PC-9 (cell line): ENCODE measurements at regions of chr10 and their contacts with region 1.

Region 1: GRCh38 chr10:114856544-114857282 is 35.1 kb downstream of the FHIP2A start:
- DNase-seq: peak; percentile 12 to 87
- H3K4me3 ChIP-seq: peak overlapping the region; percentile 17; the same call in 1 of the 2 replicates
- H3K27ac ChIP-seq: peak overlapping the region; percentile 83
- H3K4me1 ChIP-seq: peaks cover 37% of the 10 kb centered on the region
- H3K27me3 ChIP-seq: no peaks in the 10 kb centered on the region
- CTCF ChIP-seq: no peak

Region 2: GRCh38 chr10:114623661-114624294 is 232.9 kb before region 1 on chr10:
- CTCF ChIA-PET with region 1: no interaction called
- POLR2A ChIA-PET with region 1: interaction called, 8 read pairs
- intact Hi-C with region 1: loop called (anchors 2 kb)
- DNase-seq: peak; percentile 52 to 96
- H3K4me3 ChIP-seq: no peak overlapping the region
- H3K27ac ChIP-seq: peak overlapping the region; percentile 91
- H3K4me1 ChIP-seq: peaks cover 62% of the 10 kb centered on the region
- H3K27me3 ChIP-seq: no peaks in the 10 kb centered on the region
- CTCF ChIP-seq: no peak

Region 3: GRCh38 chr10:114821293-114821914 is 35.3 kb before region 1 on chr10 and contains the start of gene FHIP2A:
- CTCF ChIA-PET with region 1: interaction called, 6 read pairs
- POLR2A ChIA-PET with region 1: interaction called, 4 read pairs
- intact Hi-C with region 1: loop called (anchors 1 kb)
- DNase-seq: peak in 1 of 2 experiments; percentile 75
- H3K4me3 ChIP-seq: peak within 1 kb of the TSS; percentile 82
- H3K27ac ChIP-seq: peak within 1 kb of the TSS; percentile 97
- H3K4me1 ChIP-seq: peaks cover 29% of the 10 kb centered on the region
- H3K27me3 ChIP-seq: no peaks in the 10 kb centered on the region
- CTCF ChIP-seq: 0 out of 2 replicates have a peak, but pooled peaks have one; percentile 24
- total RNA-seq, gene FHIP2A: 16.0 and 18.3 TPM in 2 replicates

Region 4: DNA sequence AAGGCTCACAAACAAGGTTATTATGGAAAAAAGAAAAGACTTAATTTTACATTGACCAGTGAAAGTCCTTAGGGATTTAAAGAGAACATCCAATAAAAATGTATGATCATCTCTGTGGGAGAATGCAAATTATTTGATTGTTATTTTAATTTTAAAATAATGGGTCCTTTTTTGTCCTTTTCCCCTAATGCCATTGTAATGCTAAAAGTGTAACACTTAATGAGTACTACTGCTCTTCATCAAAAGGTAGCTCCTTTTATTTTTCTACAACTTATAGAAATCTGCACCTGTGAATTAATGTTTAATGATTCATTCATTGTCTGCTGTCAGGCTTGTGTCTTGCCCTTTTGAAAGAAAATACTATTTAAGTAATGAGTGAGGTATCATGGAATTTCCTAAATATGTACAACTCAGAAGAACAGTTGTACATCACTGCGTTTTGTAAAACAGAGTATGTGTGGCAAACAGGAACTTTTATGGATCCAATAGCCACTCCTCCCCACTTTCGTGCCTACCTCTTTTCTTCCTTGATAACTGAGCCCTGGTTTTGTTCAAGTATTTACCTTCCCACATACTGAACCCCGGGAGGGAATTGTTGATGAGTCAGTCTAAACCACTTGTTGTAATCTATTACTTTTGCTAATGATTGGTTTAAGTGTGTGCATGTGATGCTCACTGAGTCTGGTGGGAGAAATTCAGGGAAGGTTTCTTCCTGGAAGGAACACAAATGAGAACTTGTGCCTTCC is 61.4 kb after region 1 on chr10:
- CTCF ChIA-PET with region 1: no interaction called
- POLR2A ChIA-PET with region 1: no interaction called
- intact Hi-C with region 1: no loop called
- DNase-seq: peak; percentile 2 to 75
- H3K4me3 ChIP-seq: no peak overlapping the region
- H3K27ac ChIP-seq: no peak overlapping the region
- H3K4me1 ChIP-seq: peaks cover 13% of the 10 kb centered on the region; the same call in 1 of the 2 replicates
- H3K27me3 ChIP-seq: no peaks in the 10 kb centered on the region
- CTCF ChIP-seq: no peak